Colonic mucosa (tissue), 4 donors: ENCODE measurements at regions of chr5 and their contacts with region 1.

Region 1: GRCh38 chr5:41869739-41870626 is at the start of gene OXCT1:
- DNase-seq: peak; percentile 85
- H3K4me3 ChIP-seq: peak within 1 kb of the TSS; percentile 76
- H3K27ac ChIP-seq: peak within 1 kb of the TSS; percentile 71
- H3K4me1 ChIP-seq: peaks cover 6% of the 10 kb centered on the region
- H3K27me3 ChIP-seq: no peaks in the 10 kb centered on the region
- CTCF ChIP-seq: no peak
- total RNA-seq, gene OXCT1: 23.8 to 31.3 TPM

Region 2: DNA sequence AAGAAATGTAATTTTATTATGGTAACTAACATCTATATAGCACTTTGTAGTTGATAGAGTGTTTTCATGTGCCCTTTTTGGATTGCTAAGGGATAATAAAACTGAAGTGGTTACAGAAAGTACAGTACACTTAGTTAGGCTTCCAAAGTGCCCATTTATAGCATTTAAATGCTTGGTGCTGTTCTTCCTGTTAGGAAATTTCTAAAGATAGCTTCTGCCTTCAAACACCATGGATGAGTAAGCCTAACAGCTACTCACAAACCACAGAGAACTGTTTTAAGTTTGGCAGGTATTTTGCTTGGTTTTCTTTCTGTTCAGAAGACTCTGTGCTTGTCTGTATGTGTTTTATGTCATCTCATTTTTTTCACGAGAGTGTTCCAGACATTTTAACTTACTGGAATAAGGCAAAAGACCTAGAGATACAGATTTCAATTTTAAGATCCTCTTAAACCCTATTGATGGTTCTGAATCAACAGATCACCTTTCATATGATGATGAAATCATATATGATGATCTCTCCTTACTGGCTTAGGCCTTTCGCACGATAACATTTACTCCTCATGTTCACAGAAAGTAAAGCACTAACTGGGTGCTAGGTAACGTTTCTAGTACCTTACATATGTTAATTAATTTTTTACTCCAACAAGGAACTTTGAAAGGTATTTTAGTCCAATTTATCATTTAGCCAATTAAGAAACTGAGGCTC is 38.5 kb after region 1 on chr5:
- intact Hi-C with region 1: loop called (anchors 5 kb)
- DNase-seq: no peak
- H3K4me3 ChIP-seq: no peak overlapping the region
- H3K27ac ChIP-seq: no peak overlapping the region
- H3K4me1 ChIP-seq: no peaks in the 10 kb centered on the region
- H3K27me3 ChIP-seq: no peaks in the 10 kb centered on the region
- CTCF ChIP-seq: no peak

Region 3: GRCh38 chr5:41924872-41925554 is 55.0 kb after region 1 on chr5 and contains the start of gene FBXO4:
- intact Hi-C with region 1: loop called (anchors 5 kb)
- DNase-seq: peak; percentile 86
- H3K4me3 ChIP-seq: peak within 1 kb of the TSS; percentile 66
- H3K27ac ChIP-seq: peak within 1 kb of the TSS; percentile 88
- H3K4me1 ChIP-seq: no peaks in the 10 kb centered on the region
- H3K27me3 ChIP-seq: no peaks in the 10 kb centered on the region
- CTCF ChIP-seq: peak; percentile 32
- total RNA-seq, gene FBXO4: 7.6 to 8.6 TPM